ENCODE measurements at regions of chr21 and their contacts with region 1.

Region 1: GRCh38 chr21:35508139-35508888 is 459.2 kb upstream of the RUNX1 start:
- DNase-seq: peak; percentile 61 to 85
- H3K4me3 ChIP-seq: no peak overlapping the region
- H3K27ac ChIP-seq: no peak overlapping the region; the same call in 1 of the 2 replicates
- H3K4me1 ChIP-seq: peaks cover 42% of the 10 kb centered on the region
- H3K27me3 ChIP-seq: no peaks in the 10 kb centered on the region
- CTCF ChIP-seq: peak; percentile 68

Region 2: DNA sequence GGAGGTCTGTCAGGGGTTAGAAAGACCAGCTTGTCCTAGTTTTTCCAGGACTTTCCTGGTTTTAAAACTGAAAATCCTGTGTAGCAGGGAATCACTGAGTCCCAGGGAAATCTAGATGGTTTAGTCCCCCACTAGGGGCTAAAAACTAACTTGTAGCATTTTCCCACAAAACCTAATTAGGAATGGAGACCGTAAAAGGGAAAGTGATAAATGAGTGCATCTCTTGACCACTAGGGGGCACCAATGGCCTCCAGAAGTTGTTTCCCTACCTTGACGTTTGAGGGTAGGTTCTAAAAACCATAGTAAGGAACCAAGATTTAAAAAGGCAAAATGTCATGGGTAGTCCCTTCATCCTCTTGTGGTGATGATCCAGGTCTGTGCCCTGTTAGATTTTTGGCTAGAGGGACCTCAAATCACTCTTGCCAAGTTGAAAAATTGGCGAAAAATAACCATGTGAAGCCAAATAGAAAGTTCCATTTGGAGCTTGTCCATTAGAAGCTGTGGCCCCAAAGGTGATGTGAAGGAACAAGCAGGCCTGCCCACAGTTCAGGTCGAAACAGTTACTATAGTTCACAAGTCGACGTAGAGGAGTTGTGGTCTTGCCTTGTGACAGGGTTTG is 815.0 kb before region 1 on chr21:
- CTCF ChIA-PET with region 1: no interaction called
- POLR2A ChIA-PET with region 1: no interaction called
- intact Hi-C with region 1: loop called (anchors 5 kb)
- DNase-seq: peak; percentile 39
- H3K4me3 ChIP-seq: no peak overlapping the region
- H3K27ac ChIP-seq: 0 out of 2 replicates have a peak overlapping the region, but pooled peaks have one; percentile 89
- H3K4me1 ChIP-seq: peaks cover 38% of the 10 kb centered on the region
- H3K27me3 ChIP-seq: no peaks in the 10 kb centered on the region
- CTCF ChIP-seq: peak; percentile 86

Region 3: GRCh38 chr21:34745557-34746255 is 762.6 kb before region 1 on chr21:
- CTCF ChIA-PET with region 1: interaction called, 9 read pairs
- POLR2A ChIA-PET with region 1: no interaction called
- intact Hi-C with region 1: loop called (anchors 5 kb)
- DNase-seq: peak; percentile 56
- H3K4me3 ChIP-seq: no peak overlapping the region
- H3K27ac ChIP-seq: no peak overlapping the region
- H3K4me1 ChIP-seq: peaks cover 12% of the 10 kb centered on the region
- H3K27me3 ChIP-seq: no peaks in the 10 kb centered on the region
- CTCF ChIP-seq: peak; percentile 86

Region 4: DNA sequence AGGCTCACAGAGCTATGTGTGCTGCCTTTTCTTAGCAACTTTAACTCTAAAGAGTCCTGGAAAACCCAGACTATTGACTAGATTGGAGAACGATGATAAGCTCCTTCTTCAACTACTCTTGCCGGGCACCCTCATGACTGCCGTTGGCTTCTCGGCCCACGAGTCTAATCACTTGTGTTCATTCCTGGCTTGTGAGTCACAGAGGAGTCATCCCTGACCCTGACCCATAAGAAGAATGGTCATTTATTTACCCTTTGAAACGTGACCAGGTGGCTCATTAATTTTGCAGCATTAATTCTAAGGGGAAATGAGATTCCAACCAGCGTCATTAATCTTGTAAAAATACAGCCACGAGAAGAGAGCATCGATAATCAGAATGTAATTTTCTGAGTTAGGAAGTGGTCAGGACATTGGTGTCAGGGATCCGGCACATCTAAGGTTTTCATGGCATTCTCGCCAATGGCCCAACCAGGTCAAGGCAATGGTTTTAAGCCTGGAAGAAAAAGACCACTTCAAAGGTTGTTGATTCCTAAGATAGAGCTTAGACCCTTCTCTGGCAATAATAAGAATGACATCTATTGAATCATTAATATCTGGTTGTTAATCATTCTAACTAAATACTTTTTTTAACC is 275.7 kb before region 1 on chr21:
- CTCF ChIA-PET with region 1: interaction called, 3 read pairs
- POLR2A ChIA-PET with region 1: no interaction called
- intact Hi-C with region 1: loop called (anchors 10 kb)
- DNase-seq: peak; percentile 63 to 88
- H3K4me3 ChIP-seq: 0 out of 2 replicates have a peak overlapping the region, but pooled peaks have one; percentile 6
- H3K27ac ChIP-seq: peak overlapping the region; percentile 86
- H3K4me1 ChIP-seq: peaks cover 50% of the 10 kb centered on the region
- H3K27me3 ChIP-seq: no peaks in the 10 kb centered on the region
- CTCF ChIP-seq: no peak

Region 5: GRCh38 chr21:35256467-35256988 is 251.8 kb before region 1 on chr21:
- CTCF ChIA-PET with region 1: no interaction called
- POLR2A ChIA-PET with region 1: no interaction called
- intact Hi-C with region 1: no loop called
- DNase-seq: peak; percentile 86 to 98
- H3K4me3 ChIP-seq: peak overlapping the region; percentile 42; the same call in 1 of the 2 replicates
- H3K27ac ChIP-seq: peak overlapping the region; percentile 99
- H3K4me1 ChIP-seq: peaks cover 37% of the 10 kb centered on the region
- H3K27me3 ChIP-seq: no peaks in the 10 kb centered on the region
- CTCF ChIP-seq: no peak

Region 6: GRCh38 chr21:35400233-35400957 is 107.9 kb before region 1 on chr21:
- CTCF ChIA-PET with region 1: interaction called, 3 read pairs
- POLR2A ChIA-PET with region 1: no interaction called
- intact Hi-C with region 1: loop called (anchors 2 kb)
- DNase-seq: peak; percentile 19 to 77
- H3K4me3 ChIP-seq: no peak overlapping the region
- H3K27ac ChIP-seq: peak overlapping the region; percentile 52
- H3K4me1 ChIP-seq: peaks cover 32% of the 10 kb centered on the region
- H3K27me3 ChIP-seq: no peaks in the 10 kb centered on the region
- CTCF ChIP-seq: peak; percentile 68

Region 7: GRCh38 chr21:35575280-35575915 is 67.1 kb after region 1 on chr21:
- CTCF ChIA-PET with region 1: no interaction called
- POLR2A ChIA-PET with region 1: no interaction called
- intact Hi-C with region 1: no loop called
- DNase-seq: no peak
- H3K4me3 ChIP-seq: no peak overlapping the region
- H3K27ac ChIP-seq: no peak overlapping the region
- H3K4me1 ChIP-seq: no peaks in the 10 kb centered on the region
- H3K27me3 ChIP-seq: no peaks in the 10 kb centered on the region
- CTCF ChIP-seq: no peak

Region 8: DNA sequence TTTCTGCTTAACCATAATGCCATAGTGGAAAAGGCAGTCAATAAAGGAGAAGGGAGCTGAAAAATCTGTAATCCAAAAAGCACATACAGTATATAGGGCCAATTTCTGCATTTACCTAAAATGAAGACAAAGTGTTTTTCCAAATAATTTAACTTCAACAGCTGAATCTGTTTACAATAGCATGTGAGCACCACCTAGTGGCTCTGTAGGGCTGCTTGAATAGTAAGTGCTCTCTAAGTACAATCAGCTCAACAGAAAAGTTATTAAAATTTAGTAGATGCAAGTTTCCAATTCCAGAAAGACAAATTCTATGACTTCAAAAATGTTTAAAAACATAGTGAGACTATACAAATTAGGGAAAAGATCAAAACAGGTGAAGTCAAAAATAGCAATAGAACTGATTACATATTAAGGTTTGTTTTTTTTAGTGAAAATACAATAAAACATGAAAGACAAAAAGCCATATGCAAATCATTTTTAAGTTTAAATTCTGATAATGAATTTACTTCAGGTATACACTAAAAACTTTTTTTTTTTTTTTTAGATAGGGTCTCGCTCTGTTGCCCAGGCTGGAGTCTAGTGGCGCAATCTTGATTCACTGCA is 332.0 kb after region 1 on chr21:
- CTCF ChIA-PET with region 1: interaction called, 4 read pairs
- POLR2A ChIA-PET with region 1: interaction called, 4 read pairs
- intact Hi-C with region 1: loop called (anchors 2 kb)
- DNase-seq: peak; percentile 32 to 39
- H3K4me3 ChIP-seq: no peak overlapping the region
- H3K27ac ChIP-seq: no peak overlapping the region
- H3K4me1 ChIP-seq: no peaks in the 10 kb centered on the region
- H3K27me3 ChIP-seq: no peaks in the 10 kb centered on the region
- CTCF ChIP-seq: peak; percentile 83

Region 9: GRCh38 chr21:35940074-35940927 is 432.0 kb after region 1 on chr21:
- CTCF ChIA-PET with region 1: no interaction called
- POLR2A ChIA-PET with region 1: no interaction called
- intact Hi-C with region 1: loop called (anchors 2 kb)
- DNase-seq: peak in 1 of 2 experiments; percentile 25
- H3K4me3 ChIP-seq: no peak overlapping the region
- H3K27ac ChIP-seq: no peak overlapping the region
- H3K4me1 ChIP-seq: no peaks in the 10 kb centered on the region
- H3K27me3 ChIP-seq: no peaks in the 10 kb centered on the region
- CTCF ChIP-seq: peak; percentile 63

Region 10: GRCh38 chr21:35952190-35952589 is 443.9 kb after region 1 on chr21:
- CTCF ChIA-PET with region 1: no interaction called
- POLR2A ChIA-PET with region 1: no interaction called
- intact Hi-C with region 1: no loop called
- DNase-seq: no peak
- H3K4me3 ChIP-seq: no peak overlapping the region
- H3K27ac ChIP-seq: no peak overlapping the region
- H3K4me1 ChIP-seq: no peaks in the 10 kb centered on the region
- H3K27me3 ChIP-seq: no peaks in the 10 kb centered on the region
- CTCF ChIP-seq: no peak

Measured in PC-9 (cell line).